Spleen (tissue), 13 donors: ENCODE measurements at regions of chr16 and their contacts with region 1.

Region 1: GRCh38 chr16:87765776-87766484 is at the start of gene KLHDC4:
- DNase-seq: peak; percentile 97
- H3K4me3 ChIP-seq: peak within 1 kb of the TSS; percentile 89 to 100 (median 98)
- H3K27ac ChIP-seq: peak within 1 kb of the TSS; percentile 87 to 96 (median 94)
- H3K4me1 ChIP-seq: peaks cover 14 to 64% (median 49%) of the 10 kb centered on the region in 6 donors
- H3K27me3 ChIP-seq: peaks cover 0 to 6% (median 0%) of the 10 kb centered on the region in 7 donors
- CTCF ChIP-seq: no peak
- POLR2A ChIP-seq: peak; percentile 37 to 46 (median 42)
- total RNA-seq, gene KLHDC4: 46.7 to 91.7 (median 58.4) TPM

Region 2: DNA sequence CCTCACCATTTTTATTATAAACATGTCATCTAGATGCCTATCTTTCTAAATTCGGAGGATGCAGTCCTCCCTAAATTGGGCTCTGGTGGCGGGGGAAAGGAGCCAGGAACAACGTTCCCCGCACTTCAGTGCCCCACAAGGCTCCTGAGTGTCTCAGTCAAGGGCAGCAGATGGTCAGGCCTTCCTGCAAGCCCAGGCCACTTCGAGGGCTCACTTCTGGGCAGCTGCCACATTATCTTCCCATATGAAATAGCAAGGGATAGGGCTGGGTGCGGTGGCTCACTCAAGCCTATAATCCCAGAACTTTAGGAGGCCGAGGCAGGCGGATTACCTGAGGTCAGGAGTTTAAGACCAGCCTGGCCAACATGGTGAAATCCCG is 414.6 kb before region 1 on chr16:
- intact Hi-C with region 1: no loop called
- DNase-seq: no peak
- H3K4me3 ChIP-seq: no peak overlapping the region
- H3K27ac ChIP-seq: no peak overlapping the region
- H3K4me1 ChIP-seq: peaks cover 0 to under 1% (median 0%) of the 10 kb centered on the region in 6 donors
- H3K27me3 ChIP-seq: no peaks in the 10 kb centered on the region
- CTCF ChIP-seq: no peak
- POLR2A ChIP-seq: no peak

Region 3: DNA sequence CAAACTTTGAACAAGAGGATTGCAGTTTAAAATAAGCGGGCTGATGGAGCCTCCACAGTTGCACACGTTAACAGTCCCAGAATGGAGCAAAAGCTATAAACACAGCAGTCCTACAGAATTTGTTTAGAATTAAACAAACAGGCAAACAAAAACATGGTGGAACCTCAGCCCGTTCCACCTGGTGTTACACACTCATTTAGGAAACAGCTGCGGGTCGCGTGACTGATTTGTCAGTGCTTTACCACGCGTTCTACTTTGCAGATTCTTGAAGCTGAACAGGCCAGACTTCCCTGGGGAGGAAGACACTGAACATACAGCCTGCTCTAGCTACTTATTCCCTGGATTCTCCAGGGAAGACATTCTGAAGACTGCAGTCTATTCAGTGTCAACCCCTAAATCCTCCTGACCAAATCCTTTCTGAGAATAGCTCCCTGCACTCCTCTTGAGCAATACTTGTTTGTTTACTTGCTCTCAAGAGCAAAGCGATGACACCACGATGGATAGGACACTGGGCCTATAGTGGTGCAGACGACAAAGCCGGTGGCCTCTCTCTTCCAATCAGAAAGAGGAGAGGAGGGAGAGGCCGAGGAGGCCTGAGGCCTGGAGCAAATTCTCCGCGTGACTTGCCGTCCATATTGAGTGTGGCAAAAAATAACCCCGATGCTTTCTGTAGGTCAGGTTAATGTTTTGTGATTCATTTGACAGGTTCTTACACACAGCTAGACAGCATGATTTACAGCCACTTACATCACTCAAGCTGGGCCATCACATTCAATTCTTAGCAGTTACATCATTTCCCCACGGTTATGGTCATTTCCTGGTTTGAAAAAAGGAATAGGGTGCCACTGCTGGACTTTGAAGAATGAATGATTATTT is 377.8 kb before region 1 on chr16:
- intact Hi-C with region 1: loop called (anchors 10 kb)
- DNase-seq: peak; percentile 94
- H3K4me3 ChIP-seq: peak overlapping the region in 4 of 8 donors; percentile 2 to 57 (median 11)
- H3K27ac ChIP-seq: peak overlapping the region; percentile 75 to 95 (median 90)
- H3K4me1 ChIP-seq: peaks cover 9 to 74% (median 51%) of the 10 kb centered on the region in 6 donors
- H3K27me3 ChIP-seq: no peaks in the 10 kb centered on the region
- CTCF ChIP-seq: no peak
- POLR2A ChIP-seq: peak in 2 of 3 donors; percentile 6 to 64

Region 4: GRCh38 chr16:87581833-87582203 is 184.1 kb before region 1 on chr16:
- intact Hi-C with region 1: loop called (anchors 10 kb)
- DNase-seq: peak; percentile 45
- H3K4me3 ChIP-seq: no peak overlapping the region
- H3K27ac ChIP-seq: peak overlapping the region in 7 of 8 donors; percentile 67 to 84 (median 78)
- H3K4me1 ChIP-seq: peaks cover 0 to 24% (median 10%) of the 10 kb centered on the region in 6 donors
- H3K27me3 ChIP-seq: peaks cover 0 to 73% (median 6%) of the 10 kb centered on the region in 7 donors
- CTCF ChIP-seq: no peak
- POLR2A ChIP-seq: no peak

Region 5: GRCh38 chr16:87645802-87646201 is 120.1 kb before region 1 on chr16:
- intact Hi-C with region 1: no loop called
- DNase-seq: no peak
- H3K4me3 ChIP-seq: no peak overlapping the region
- H3K27ac ChIP-seq: no peak overlapping the region
- H3K4me1 ChIP-seq: no peaks in the 10 kb centered on the region
- H3K27me3 ChIP-seq: peaks cover 0 to 49% (median 20%) of the 10 kb centered on the region in 7 donors
- CTCF ChIP-seq: no peak
- POLR2A ChIP-seq: no peak

Region 6: GRCh38 chr16:87661561-87661960 is 104.4 kb before region 1 on chr16:
- intact Hi-C with region 1: no loop called
- DNase-seq: no peak
- H3K4me3 ChIP-seq: no peak overlapping the region
- H3K27ac ChIP-seq: no peak overlapping the region
- H3K4me1 ChIP-seq: peaks cover 0 to 6% (median 0%) of the 10 kb centered on the region in 6 donors
- H3K27me3 ChIP-seq: peaks cover 0 to 81% (median 0%) of the 10 kb centered on the region in 7 donors
- CTCF ChIP-seq: no peak
- POLR2A ChIP-seq: no peak